BJ (cell line): ENCODE measurements at regions of chr4 and their contacts with region 1.

Region 1: DNA sequence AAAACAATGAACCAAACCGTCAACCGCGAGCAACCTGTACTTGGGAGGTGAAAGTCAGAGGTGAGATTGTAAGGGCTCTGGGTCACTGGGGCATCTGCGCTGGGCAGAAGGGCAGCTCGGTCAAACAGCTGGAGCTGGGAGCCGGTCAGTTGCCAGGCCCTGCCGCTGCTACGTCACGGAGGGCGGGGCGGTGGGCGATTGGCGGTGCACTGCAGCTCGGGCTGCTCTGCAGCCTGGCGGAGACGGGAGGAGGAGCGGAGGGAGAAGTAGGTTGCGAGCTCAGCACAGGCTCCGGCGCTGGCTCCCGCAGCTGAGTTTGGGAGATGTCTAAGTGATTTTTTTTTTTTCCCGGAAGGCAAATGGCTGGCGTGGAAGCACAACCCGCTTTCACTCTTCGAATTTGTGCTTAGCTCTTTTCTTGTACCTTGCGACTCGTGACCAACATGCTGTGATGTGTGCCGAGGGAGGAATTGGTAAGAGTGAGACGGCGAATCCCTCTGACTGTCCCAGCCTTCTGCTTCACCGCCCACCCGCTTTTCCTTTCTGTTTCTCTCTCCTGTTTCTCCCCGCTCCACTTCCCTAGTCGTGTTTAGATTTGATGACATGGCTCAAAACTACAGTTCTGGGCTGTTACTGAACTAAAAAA is at the start of gene ATP10D:
- DNase-seq: peak; percentile 64
- H3K4me3 ChIP-seq: peak within 1 kb of the TSS; percentile 58
- H3K27me3 ChIP-seq: no peaks in the 10 kb centered on the region
- CTCF ChIP-seq: peak; percentile 39
- polyA plus RNA-seq, gene ATP10D: 65.5 and 74.1 TPM in 2 replicates

Region 2: GRCh38 chr4:47415719-47416118 is 69.5 kb before region 1 on chr4:
- CTCF ChIA-PET with region 1: no interaction called
- POLR2A ChIA-PET with region 1: no interaction called
- DNase-seq: no peak
- H3K4me3 ChIP-seq: no peak overlapping the region
- H3K27me3 ChIP-seq: peaks cover 3% of the 10 kb centered on the region; the same call in 1 of the 2 replicates
- CTCF ChIP-seq: no peak

Region 3: GRCh38 chr4:47471064-47471463 is 14.1 kb before region 1 on chr4:
- CTCF ChIA-PET with region 1: interaction called, 10 read pairs
- POLR2A ChIA-PET with region 1: no interaction called
- DNase-seq: no peak
- H3K4me3 ChIP-seq: no peak overlapping the region
- H3K27me3 ChIP-seq: no peaks in the 10 kb centered on the region
- CTCF ChIP-seq: no peak

Region 4: GRCh38 chr4:47505147-47505546 is 20.0 kb after region 1 on chr4:
- CTCF ChIA-PET with region 1: interaction called, 3 read pairs
- POLR2A ChIA-PET with region 1: interaction called, 10 read pairs
- DNase-seq: no peak
- H3K4me3 ChIP-seq: no peak overlapping the region
- H3K27me3 ChIP-seq: no peaks in the 10 kb centered on the region
- CTCF ChIP-seq: no peak

Region 5: GRCh38 chr4:47873877-47874541 is 388.8 kb after region 1 on chr4:
- CTCF ChIA-PET with region 1: no interaction called
- POLR2A ChIA-PET with region 1: no interaction called
- DNase-seq: no peak
- H3K4me3 ChIP-seq: no peak overlapping the region
- H3K27me3 ChIP-seq: no peaks in the 10 kb centered on the region
- CTCF ChIP-seq: no peak